Vagina (tissue), 2 donors: ENCODE measurements at regions of chr9 and their contacts with region 1.

Region 1: GRCh38 chr9:98860871-98861293 is 53.4 kb downstream of the GALNT12 start:
- DNase-seq: no peak
- H3K4me3 ChIP-seq: no peak overlapping the region
- H3K27ac ChIP-seq: peak overlapping the region; percentile 64
- H3K4me1 ChIP-seq: peaks cover 40% of the 10 kb centered on the region
- H3K27me3 ChIP-seq: no peaks in the 10 kb centered on the region
- CTCF ChIP-seq: peak; percentile 38 to 44 (median 42)
- POLR2A ChIP-seq: no peak

Region 2: GRCh38 chr9:98520221-98520960 is 340.5 kb before region 1 on chr9:
- intact Hi-C with region 1: no loop called
- DNase-seq: peak; percentile 72
- H3K4me3 ChIP-seq: no peak overlapping the region
- H3K27ac ChIP-seq: no peak overlapping the region
- H3K4me1 ChIP-seq: no peaks in the 10 kb centered on the region
- H3K27me3 ChIP-seq: no peaks in the 10 kb centered on the region
- CTCF ChIP-seq: no peak
- POLR2A ChIP-seq: no peak

Region 3: DNA sequence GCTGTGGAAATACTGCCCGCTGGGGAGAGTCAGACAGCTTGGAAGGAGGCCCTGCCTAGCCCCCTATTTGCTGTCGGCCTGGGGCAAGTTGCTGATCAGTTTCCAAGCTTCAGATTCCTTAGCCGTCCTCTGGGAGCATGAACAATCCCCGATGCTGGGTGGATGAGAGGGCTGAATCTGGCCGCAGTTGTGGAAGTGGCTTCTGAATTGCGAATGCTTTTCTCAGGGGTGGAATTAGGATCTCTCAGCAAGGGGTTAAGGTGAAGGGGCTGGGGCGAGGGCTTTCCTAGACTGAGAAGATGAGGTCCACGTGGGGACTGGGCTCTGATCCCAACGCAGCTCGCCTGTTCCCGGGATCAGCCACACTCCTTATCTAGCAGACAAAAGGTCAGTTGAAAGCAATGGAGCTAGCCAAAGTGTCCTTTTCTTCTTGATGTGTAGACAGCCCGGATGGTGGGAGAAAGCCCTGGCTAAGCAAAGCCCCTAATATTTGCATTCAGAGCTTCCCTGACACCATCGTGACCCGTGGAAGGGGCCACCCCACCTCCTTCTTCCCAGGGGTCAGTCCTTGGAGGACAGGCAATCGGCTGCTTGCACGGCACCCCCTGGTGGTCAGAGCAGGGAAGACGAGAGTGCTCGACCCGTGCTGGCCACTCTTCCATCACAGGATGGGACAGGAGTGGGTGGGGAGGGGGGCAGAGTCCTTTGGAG is 137.7 kb after region 1 on chr9:
- intact Hi-C with region 1: loop called (anchors 1 kb)
- DNase-seq: peak; percentile 34 to 88
- H3K4me3 ChIP-seq: peak overlapping the region in 1 of 2 donors; percentile 13
- H3K27ac ChIP-seq: peak overlapping the region; percentile 70
- H3K4me1 ChIP-seq: peaks cover 40% of the 10 kb centered on the region
- H3K27me3 ChIP-seq: no peaks in the 10 kb centered on the region
- CTCF ChIP-seq: peak; percentile 63 to 92 (median 91)
- POLR2A ChIP-seq: no peak